IMR-90 (cell line): ENCODE measurements at regions of chr10 and their contacts with region 1.

Region 1: DNA sequence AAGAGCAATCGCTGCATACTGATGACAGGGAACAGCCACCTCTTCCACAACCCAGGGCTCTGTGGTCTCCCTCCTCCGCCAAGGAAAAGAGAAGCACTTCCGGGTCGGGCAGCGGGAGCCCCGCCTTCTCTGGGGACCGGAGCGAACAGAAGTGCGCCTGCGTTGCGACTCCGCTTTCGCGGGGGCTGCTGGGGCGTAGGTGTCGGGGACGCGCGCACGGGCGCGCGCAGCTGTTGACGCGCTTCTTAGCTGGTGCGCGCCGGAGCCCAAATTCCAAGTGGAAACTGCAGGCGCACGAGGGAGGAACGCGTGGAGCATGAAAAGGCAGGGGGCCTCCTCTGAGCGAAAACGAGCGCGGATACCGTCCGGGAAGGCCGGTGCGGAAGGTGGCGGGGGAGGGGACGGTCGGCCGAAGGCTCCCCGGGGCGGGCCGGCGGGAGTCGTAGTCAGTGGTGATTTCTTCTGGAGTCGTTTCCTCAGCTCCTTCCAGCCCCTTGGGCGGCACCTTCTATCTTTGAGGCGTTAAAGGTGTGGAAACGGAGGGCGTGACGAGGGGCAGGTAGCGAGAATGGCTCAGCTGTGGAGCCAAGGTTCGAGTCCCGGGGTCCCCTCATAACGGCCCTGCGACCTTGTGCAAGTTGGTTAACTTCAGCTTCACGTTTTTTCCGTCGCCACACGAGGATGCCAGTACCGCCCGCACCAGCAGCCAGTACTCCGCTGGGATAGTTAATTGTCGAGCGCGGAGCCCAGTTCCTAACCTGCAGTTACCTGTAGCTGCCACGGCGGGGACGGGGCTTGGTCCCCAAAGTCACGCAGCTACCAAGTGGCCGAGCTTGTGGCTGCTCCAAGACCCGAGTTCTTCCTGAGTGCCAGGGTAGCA is at the starts of genes COX15 and CUTC:
- DNase-seq: peak; percentile 96
- ATAC-seq: peak; percentile 95
- H3K4me3 ChIP-seq: peak within 1 kb of the TSS; percentile 69
- H3K27ac ChIP-seq: peak within 1 kb of the TSS; percentile 96
- H3K4me1 ChIP-seq: peaks cover 2% of the 10 kb centered on the region; the same call in 1 of the 2 replicates
- H3K27me3 ChIP-seq: no peaks in the 10 kb centered on the region
- CTCF ChIP-seq: peak; percentile 25; the same call in 1 of the 2 replicates
- POLR2A ChIP-seq: peak; percentile 79
- RAD21 ChIP-seq: peak; percentile 30
- total RNA-seq, gene COX15: 40.1 and 41.1 TPM in 2 replicates
- total RNA-seq, gene CUTC: 7.0 and 17.2 TPM in 2 replicates

Region 2: DNA sequence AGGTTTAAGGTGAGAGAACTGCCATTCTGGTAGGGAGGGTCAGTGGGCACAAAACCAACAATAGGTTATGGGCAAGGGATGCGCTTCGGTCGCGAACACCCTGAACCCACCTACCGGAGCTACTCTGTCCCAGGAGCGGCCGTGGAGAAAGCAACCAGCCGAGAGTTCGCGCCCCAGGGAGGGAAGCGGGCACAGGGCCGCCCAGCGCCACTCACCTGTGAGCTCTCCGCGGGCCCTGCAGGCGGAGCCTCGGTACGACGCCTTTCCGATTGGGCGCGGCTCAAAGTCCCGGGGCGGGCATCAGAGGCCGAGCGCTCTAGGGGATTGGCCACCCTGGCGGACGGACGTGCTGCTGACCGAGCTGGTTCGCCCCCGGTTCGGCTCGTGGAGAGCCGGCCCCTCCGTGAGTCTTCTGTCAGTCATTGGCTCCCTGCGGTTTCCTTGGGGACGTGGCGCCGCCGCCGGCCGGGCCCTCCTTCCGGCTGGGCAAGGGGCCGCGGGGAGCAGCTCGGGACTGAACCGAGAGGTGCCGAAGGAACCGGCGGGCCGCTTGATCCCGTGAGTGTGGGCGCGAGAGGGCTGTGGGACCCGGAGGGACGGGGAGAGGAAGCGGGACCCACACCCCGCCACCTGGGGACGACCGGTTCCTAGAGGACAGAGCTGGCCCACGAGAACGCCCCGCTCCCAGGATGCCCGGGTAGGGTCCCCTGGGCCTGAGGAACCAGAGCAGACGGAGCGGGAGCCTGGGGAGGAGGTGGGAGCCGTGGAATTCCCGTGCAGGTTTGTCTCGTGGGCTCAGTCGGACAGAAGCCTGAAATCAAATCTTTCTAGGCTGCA is 73.0 kb before region 1 on chr10 and contains the start of gene ENTPD7:
- CTCF ChIA-PET with region 1: no interaction called
- POLR2A ChIA-PET with region 1: no interaction called
- dilution Hi-C with region 1: no loop called
- in situ Hi-C with region 1: no loop called
- intact Hi-C with region 1: no loop called
- DNase-seq: peak; percentile 95
- ATAC-seq: peak; percentile 99
- H3K4me3 ChIP-seq: peak within 1 kb of the TSS; percentile 79
- H3K27ac ChIP-seq: peak within 1 kb of the TSS; percentile 69
- H3K4me1 ChIP-seq: peaks cover 5% of the 10 kb centered on the region; the same call in 1 of the 2 replicates
- H3K27me3 ChIP-seq: no peaks in the 10 kb centered on the region
- CTCF ChIP-seq: 0 out of 2 replicates have a peak, but pooled peaks have one; percentile 8
- POLR2A ChIP-seq: peak; percentile 88
- RAD21 ChIP-seq: no peak
- total RNA-seq, gene ENTPD7: 20.0 and 23.3 TPM in 2 replicates

Region 3: GRCh38 chr10:99784025-99784726 is 51.9 kb after region 1 on chr10:
- CTCF ChIA-PET with region 1: no interaction called
- POLR2A ChIA-PET with region 1: no interaction called
- dilution Hi-C with region 1: no loop called
- in situ Hi-C with region 1: no loop called
- intact Hi-C with region 1: loop called (anchors 5 kb)
- DNase-seq: peak; percentile 90
- ATAC-seq: peak; percentile 54
- H3K4me3 ChIP-seq: no peak overlapping the region
- H3K27ac ChIP-seq: peak overlapping the region; percentile 83
- H3K4me1 ChIP-seq: peaks cover 20% of the 10 kb centered on the region
- H3K27me3 ChIP-seq: no peaks in the 10 kb centered on the region
- CTCF ChIP-seq: no peak
- POLR2A ChIP-seq: no peak
- RAD21 ChIP-seq: peak; percentile 16; the same call in 1 of the 2 replicates

Region 4: DNA sequence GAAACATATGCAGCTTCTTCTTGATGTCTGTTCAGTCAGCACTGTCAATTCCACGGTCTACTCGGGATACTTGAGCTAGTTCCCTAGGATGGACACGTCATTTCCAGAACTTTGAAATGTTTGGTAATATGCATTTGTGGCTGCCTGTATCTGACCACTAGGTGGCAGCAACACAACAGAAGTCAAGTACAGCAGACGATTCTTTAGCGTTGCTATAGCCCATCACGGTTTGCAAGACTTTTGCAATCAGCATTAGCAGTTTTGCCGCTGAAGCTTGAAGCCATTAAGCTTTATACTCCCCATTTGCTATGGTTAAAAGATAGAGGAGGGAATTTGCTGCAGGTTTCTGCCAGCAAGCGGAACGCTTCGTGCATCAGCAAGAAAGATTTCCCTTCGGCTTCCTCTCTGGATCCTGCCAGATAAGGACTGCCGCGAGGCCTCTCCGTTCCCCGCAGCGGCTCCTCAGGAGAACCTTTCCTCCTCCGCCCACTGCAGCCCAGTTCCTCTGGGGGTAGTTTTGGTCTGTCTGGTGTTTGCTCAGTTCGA is 113.6 kb after region 1 on chr10:
- CTCF ChIA-PET with region 1: interaction called, 5 read pairs
- POLR2A ChIA-PET with region 1: interaction called, 3 read pairs
- dilution Hi-C with region 1: no loop called
- in situ Hi-C with region 1: no loop called
- intact Hi-C with region 1: loop called (anchors 1 kb)
- DNase-seq: peak; percentile 94
- ATAC-seq: peak; percentile 94
- H3K4me3 ChIP-seq: no peak overlapping the region
- H3K27ac ChIP-seq: no peak overlapping the region
- H3K4me1 ChIP-seq: no peaks in the 10 kb centered on the region
- H3K27me3 ChIP-seq: no peaks in the 10 kb centered on the region
- CTCF ChIP-seq: peak; percentile 96
- POLR2A ChIP-seq: no peak
- RAD21 ChIP-seq: peak; percentile 93